Ascending aorta (tissue), 2 donors: ENCODE measurements at regions of chr13 and their contacts with region 1.

Region 1: DNA sequence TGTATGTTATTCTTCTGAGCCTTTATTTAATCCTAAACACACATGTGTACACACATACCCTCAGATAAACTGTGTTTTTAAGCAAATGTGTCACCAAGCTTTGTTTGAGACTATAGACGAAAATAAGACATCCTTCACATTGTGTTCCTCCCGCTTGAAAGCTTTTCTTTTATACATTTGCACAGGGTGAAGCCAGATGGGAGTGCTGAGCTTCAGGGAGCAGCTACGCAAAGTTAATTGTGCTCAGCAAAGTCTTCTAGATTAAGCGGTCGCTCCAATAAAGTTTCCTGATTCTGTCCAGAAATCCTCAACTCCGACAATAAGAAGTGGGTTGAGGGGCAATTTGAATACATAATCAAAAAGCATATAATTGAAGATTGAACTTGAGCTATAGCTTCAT is 117.2 kb upstream of the ARGLU1 start:
- DNase-seq: no peak
- H3K4me3 ChIP-seq: no peak overlapping the region
- H3K27ac ChIP-seq: no peak overlapping the region
- H3K4me1 ChIP-seq: no peaks in the 10 kb centered on the region
- H3K27me3 ChIP-seq: no peaks in the 10 kb centered on the region
- CTCF ChIP-seq: no peak

Region 2: DNA sequence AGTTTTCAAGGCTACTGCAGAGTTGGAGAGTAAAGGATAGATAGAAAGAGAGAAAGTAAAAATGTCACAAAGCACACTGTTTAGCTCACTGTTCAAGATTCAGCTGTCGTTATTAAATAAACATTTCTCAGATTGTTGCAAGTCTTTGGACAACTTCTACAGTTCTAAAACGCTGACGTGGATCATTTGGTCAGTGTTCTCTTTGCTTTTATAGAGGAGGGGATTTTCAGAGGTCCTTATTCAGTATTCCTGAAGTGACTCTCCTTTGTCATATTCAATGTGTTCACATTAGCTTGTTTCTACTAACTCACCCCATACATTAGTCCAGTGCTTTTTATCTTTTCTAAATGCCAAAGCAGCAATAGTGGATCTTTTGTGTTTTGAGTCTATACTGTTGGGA is 37.5 kb after region 1 on chr13:
- intact Hi-C with region 1: loop called (anchors 1 kb)
- DNase-seq: no peak
- H3K4me3 ChIP-seq: no peak overlapping the region
- H3K27ac ChIP-seq: no peak overlapping the region
- H3K4me1 ChIP-seq: no peaks in the 10 kb centered on the region
- H3K27me3 ChIP-seq: no peaks in the 10 kb centered on the region
- CTCF ChIP-seq: no peak

Region 3: GRCh38 chr13:107231944-107232343 is 546.8 kb after region 1 on chr13:
- intact Hi-C with region 1: no loop called
- DNase-seq: no peak
- H3K4me3 ChIP-seq: no peak overlapping the region
- H3K27ac ChIP-seq: no peak overlapping the region
- H3K4me1 ChIP-seq: no peaks in the 10 kb centered on the region
- H3K27me3 ChIP-seq: no peaks in the 10 kb centered on the region
- CTCF ChIP-seq: no peak